ENCODE measurements at regions of chr6 and their contacts with region 1.

Region 1: DNA sequence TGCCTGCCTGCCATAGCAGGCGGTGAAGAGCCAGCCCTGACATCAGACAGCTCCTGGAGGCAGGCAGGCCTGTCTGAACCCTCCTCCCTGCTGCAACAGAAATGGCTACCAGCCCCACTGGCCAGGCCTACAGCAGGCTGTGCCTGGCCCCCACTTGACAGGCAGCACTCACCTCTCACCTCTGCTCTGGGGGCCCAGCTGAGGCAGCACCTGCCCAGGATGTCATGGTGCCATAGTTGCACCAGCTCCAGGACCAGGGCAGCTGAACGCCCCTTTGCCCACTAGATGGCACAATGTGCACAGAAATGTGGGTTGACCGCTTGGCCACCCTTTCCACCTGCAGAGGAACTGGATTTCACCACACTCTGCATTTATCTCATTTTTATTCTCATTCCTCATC is 30.6 kb downstream of the MRPL14 start:
- DNase-seq: peak; percentile 66 to 86 (median 85)
- ATAC-seq: peak; percentile 66 to 78
- H3K4me3 ChIP-seq: no peak overlapping the region
- H3K27ac ChIP-seq: no peak overlapping the region
- H3K4me1 ChIP-seq: no peaks in the 10 kb centered on the region
- H3K27me3 ChIP-seq: no peaks in the 10 kb centered on the region

Region 2: GRCh38 chr6:44133003-44133931 is 36.7 kb after region 1 on chr6:
- intact Hi-C with region 1: loop called in 1 of 4 experiments (anchors 5 kb)
- DNase-seq: peak; percentile 43 to 74 (median 71)
- ATAC-seq: peak; percentile 80 to 84
- H3K4me3 ChIP-seq: no peak overlapping the region
- H3K27ac ChIP-seq: no peak overlapping the region
- H3K4me1 ChIP-seq: peaks cover 4% of the 10 kb centered on the region
- H3K27me3 ChIP-seq: no peaks in the 10 kb centered on the region

Region 3: GRCh38 chr6:44151348-44152108 is 54.9 kb after region 1 on chr6:
- intact Hi-C with region 1: loop called (anchors 2 to 5 kb)
- DNase-seq: peak; percentile 74 to 91 (median 90)
- ATAC-seq: peak; percentile 68 to 74
- H3K4me3 ChIP-seq: no peak overlapping the region
- H3K27ac ChIP-seq: no peak overlapping the region
- H3K4me1 ChIP-seq: peaks cover 3% of the 10 kb centered on the region
- H3K27me3 ChIP-seq: no peaks in the 10 kb centered on the region

Region 4: GRCh38 chr6:44237813-44238433 is 141.3 kb after region 1 on chr6:
- intact Hi-C with region 1: loop called in 2 of 4 experiments (anchors 10 kb)
- DNase-seq: peak; percentile 85 to 94 (median 93)
- ATAC-seq: peak; percentile 87 to 89
- H3K4me3 ChIP-seq: peak overlapping the region; percentile 54
- H3K27ac ChIP-seq: peak overlapping the region; percentile 97
- H3K4me1 ChIP-seq: peaks cover 13% of the 10 kb centered on the region
- H3K27me3 ChIP-seq: no peaks in the 10 kb centered on the region

Region 5: DNA sequence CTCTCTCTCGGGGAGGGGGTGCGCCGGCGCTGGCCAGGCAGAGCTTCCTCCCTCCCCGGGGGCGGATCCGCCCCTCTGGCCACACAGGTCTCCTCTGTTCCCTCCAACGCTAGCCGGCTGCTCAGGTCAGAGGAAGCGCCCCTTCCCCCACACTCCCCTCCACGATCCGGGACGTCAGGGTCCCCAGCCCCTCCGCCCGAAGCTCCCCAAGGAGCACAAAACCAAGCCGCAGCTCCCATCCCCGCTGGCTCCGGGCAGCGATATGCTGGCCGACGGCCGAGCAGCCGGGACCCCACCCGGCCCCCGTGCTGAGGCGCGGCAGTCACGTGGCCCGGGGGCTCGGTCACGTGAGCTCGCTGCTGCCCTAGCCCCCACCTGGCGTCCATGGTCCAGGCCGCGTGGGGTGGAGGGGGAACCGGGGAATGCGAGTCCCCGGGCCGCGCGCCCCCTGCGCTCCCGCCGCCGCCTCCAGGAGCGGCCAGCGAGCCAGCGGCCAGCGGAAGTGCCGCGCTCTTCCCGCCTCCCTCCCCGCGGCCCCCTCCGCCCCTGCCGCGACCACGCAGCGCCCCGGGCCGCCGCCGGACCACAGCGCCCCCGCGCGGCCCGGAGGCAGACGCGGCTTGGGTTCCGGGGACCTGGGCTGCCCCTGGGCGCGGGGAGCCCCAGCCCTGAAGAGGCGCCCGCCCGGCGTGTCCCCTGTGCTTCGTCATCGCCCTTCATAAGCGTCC is 160.6 kb after region 1 on chr6 and contains the start of gene SLC35B2:
- intact Hi-C with region 1: no loop called
- DNase-seq: peak; percentile 80 to 91 (median 88)
- ATAC-seq: peak; percentile 70 to 76
- H3K4me3 ChIP-seq: peak within 1 kb of the TSS; percentile 71
- H3K27ac ChIP-seq: peak within 1 kb of the TSS; percentile 71
- H3K4me1 ChIP-seq: peaks cover 7% of the 10 kb centered on the region
- H3K27me3 ChIP-seq: no peaks in the 10 kb centered on the region
- total RNA-seq, gene SLC35B2: 21.0 to 25.2 (median 23.0) TPM

Region 6: GRCh38 chr6:44338228-44339122 is 241.9 kb after region 1 on chr6:
- intact Hi-C with region 1: loop called in 3 of 4 experiments (anchors 10 kb)
- DNase-seq: peak; percentile 19 to 80 (median 73)
- ATAC-seq: peak; percentile 71 to 73
- H3K4me3 ChIP-seq: no peak overlapping the region
- H3K27ac ChIP-seq: no peak overlapping the region
- H3K4me1 ChIP-seq: no peaks in the 10 kb centered on the region
- H3K27me3 ChIP-seq: no peaks in the 10 kb centered on the region

Measured in right cardiac atrium (tissue), 5 donors.